ENCODE measurements at regions of chr7 and their contacts with region 1.

Region 1: DNA sequence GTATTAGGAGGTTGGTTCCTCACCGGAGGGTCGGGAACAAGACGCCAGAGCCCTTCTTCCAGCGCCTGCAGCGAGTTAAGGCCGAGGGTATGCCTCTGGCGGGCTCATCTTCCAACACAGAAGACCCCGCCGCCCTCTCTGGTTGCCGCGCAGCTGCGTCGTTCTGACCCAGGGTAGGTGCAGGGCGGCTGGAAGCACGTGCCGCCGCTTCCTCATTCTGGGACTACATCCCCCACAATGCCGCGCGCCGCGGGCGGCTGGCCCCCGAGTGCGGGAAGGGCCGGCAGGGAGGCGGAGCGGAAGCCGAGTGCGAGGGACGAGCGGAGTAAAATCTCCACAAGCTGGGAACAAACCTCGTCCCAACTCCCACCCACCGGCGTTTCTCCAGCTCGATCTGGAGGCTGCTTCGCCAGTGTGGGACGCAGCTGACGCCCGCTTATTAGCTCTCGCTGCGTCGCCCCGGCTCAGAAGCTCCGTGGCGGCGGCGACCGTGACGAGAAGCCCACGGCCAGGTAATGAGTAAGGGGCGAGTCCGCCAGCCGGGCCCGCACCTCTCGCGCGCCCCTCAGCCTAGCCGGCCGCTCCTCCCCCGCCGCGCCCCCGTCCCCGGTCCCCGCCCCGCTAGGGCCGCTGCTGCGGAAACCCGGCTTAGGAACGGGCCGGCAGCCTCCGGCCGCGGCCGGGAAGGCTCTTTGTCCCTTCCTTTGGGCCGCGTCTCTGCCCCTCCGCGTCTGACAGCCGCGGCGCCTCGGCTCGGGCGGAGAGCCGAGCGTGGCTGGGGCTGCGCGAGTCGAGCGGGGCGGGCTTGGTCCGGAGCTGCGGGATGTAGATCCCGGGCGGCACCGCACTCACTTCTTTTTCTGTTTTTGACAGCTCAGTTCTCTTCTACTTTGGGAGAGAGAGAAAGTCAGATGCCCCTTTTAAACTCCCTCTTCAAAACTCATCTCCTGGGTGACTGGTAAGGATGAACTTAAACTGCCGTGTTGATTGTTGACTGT is at the start of gene CCDC126:
- DNase-seq: peak; percentile 93 to 97 (median 96)
- ATAC-seq: peak; percentile 98 to 99 (median 99)
- H3K4me3 ChIP-seq: peak within 1 kb of the TSS; percentile 59 to 98 (median 76)
- H3K27ac ChIP-seq: peak within 1 kb of the TSS; percentile 87 to 99 (median 96)
- H3K4me1 ChIP-seq: peaks cover 0 to 19% (median 13%) of the 10 kb centered on the region in 12 donors
- H3K27me3 ChIP-seq: no peaks in the 10 kb centered on the region
- CTCF ChIP-seq: peak in 1 of 12 donors; percentile 6
- POLR2A ChIP-seq: peak in 1 of 2 donors; percentile 53
- total RNA-seq, gene CCDC126: 4.7 to 13.7 (median 9.9) TPM

Region 2: DNA sequence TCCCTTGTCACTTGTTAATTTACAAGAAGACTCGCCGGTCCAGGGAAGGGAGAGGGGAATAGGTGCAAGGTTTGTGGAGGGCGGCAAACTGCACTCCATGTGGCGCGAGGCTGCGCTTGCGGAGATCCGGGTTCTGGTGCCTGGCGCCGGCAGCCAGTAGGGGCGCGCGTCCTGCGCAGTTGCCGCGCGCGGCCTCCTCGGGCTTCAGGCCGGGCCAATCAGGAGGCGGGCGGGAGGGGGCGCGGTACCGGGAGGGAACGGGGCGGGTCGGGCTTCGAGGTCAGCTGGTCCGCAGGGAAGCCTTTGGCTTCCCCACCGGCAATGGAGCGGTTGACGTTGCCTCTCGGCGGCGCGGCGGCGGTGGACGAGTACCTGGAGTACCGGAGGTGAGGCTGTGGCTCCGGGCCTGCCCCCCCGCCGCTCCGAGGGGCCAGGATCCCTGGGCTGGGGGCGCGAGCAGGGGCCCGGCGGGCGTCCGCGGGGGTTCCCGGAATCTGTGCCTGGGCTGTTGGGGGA is 82.6 kb after region 1 on chr7 and contains the start of gene FAM221A:
- intact Hi-C with region 1: loop called (anchors 1 to 5 kb)
- DNase-seq: peak; percentile 90 to 94 (median 92)
- ATAC-seq: peak; percentile 94 to 100 (median 100)
- H3K4me3 ChIP-seq: peak within 1 kb of the TSS; percentile 60 to 96 (median 84)
- H3K27ac ChIP-seq: peak within 1 kb of the TSS; percentile 53 to 86 (median 82)
- H3K4me1 ChIP-seq: peaks cover 0 to 19% (median 7%) of the 10 kb centered on the region in 12 donors
- H3K27me3 ChIP-seq: no peaks in the 10 kb centered on the region
- CTCF ChIP-seq: peak; percentile 63 to 81 (median 79)
- POLR2A ChIP-seq: peak in 1 of 2 donors; percentile 42
- total RNA-seq, gene FAM221A: 2.7 to 6.7 (median 3.4) TPM

Region 3: DNA sequence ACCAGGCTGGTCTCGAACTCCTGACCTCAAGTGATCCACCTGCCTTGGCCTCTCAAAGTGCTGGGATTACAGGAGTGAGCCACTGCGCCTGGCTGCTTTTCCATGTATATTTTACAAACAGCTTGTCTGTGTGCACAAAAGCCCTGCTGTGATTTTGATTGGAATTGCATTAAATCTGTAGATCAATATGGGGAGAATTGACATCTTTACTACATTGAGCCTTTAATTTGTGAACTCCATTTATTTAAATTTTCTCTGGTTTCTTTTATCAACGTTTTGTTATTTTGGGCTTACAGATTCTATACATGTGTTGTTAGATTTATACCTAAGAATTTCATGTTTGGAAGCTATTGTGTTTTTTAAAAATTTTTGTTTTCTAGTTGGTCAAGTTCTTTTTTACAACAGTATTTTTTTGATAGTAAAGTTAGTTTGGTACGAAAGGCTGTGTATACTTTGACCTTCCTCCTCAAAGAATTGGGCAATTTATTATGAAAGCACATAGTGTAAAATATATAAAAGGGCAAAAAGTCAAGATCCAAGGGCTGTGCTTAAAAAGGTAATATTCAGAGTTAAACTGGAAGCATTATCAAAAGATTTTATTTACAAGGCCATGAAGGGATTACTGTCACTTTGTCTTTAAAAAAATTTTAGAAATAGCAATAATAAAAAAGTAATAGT is 205.5 kb after region 1 on chr7:
- intact Hi-C with region 1: no loop called
- DNase-seq: no peak
- ATAC-seq: no peak
- H3K4me3 ChIP-seq: no peak overlapping the region
- H3K27ac ChIP-seq: no peak overlapping the region
- H3K4me1 ChIP-seq: no peaks in the 10 kb centered on the region
- H3K27me3 ChIP-seq: peaks cover 0 to 7% (median 0%) of the 10 kb centered on the region in 9 donors
- CTCF ChIP-seq: no peak
- POLR2A ChIP-seq: no peak

Measured in heart left ventricle (tissue), 16 donors.